Naive thymus-derived CD4-positive, alpha-beta T cell (primary cell): ENCODE measurements at regions of chr1 and their contacts with region 1.

Region 1: DNA sequence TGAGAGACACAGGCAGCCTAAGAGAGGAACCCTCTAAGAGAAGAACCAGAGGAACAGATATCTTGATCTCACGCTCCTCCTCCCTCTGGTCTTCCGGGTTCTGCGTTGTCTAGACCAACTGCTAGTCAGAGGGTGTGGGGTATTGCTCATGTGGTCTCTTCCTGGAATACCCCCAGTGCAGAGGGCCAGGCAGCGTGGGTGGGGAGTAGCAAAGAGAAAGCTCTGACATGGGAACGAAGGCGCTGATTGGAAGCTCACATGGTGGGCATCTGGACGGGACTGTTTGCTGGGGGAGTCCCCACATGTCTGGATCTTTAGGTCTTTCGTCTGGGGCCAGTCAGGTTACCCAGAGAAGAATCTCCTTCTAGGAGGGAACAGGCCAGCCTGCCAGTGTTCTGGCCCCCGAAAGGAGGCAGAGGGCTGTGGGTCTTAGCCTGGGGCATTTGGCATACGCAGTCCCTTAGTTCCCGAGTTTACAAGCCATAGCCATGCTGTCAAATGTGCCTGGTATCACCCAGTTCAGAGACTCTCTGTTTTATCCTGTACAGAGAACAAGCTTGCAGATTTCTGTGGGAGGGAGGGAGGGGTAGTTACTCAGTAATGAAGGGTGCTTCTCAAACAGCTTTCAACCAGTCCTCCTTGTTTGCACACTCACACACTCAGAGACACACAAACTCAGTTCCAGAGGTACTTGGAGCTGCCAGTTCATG is 18.3 kb upstream of the IL6R start:
- DNase-seq: peak; percentile 21 to 81 (median 66)
- ATAC-seq: peak; percentile 95
- H3K4me3 ChIP-seq: peak overlapping the region; percentile 57
- H3K4me3 Mint-ChIP-seq: peak overlapping the region; percentile 65 to 92 (median 83)
- H3K27ac ChIP-seq: peak overlapping the region; percentile 82
- H3K27ac Mint-ChIP-seq: peak overlapping the region; percentile 92 to 99 (median 97)
- H3K4me1 ChIP-seq: peaks cover 26 to 38% of the 10 kb centered on the region in 2 donors
- H3K4me1 Mint-ChIP-seq: peaks cover 28 to 63% (median 43%) of the 10 kb centered on the region in 7 donors
- H3K27me3 ChIP-seq: no peaks in the 10 kb centered on the region
- H3K27me3 Mint-ChIP-seq: no peaks in the 10 kb centered on the region

Region 2: DNA sequence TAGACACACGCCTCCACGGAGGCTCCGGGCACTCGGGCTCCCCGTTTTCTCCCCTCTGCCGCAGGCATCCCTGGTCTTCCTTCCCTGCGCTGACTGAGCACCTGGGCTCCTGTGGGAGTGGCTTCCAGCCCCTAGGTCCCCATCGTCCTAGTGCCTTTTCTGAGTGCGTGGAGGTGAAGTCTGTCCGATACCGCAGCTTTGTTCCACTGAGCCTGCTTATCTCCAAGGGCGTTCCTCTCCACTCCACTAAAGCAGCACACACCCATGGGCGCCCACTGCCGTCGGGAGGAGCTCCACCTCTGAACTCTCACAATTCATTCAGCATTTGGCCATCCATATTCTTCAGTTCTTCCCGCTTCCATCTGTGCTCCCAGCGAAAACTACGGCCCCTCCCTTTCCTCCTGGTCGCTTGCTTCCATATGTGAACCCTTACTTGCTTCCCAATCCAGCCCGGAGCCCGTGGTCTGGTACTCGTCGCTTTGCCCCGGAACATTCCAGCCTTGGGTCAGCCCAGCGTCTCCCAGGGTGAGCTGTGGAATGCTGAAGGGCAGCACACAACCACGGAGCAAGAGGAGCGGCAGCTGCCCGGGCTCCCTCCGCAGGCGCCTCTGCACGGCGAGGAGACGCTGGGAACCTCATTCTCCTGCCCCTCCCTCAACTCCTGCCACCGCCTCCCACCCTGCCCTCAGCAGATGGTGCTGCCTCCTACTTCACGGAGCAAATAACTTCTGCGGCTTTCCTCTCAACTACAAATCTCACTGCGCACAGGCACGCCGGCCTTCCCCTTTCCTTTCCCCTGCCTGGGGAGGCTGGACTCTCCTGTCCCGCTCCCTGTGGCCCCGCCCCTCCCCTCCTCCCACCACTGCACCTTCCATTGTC is 34.0 kb before region 1 on chr1:
- CTCF ChIA-PET with region 1: interaction called, 7 read pairs
- POLR2A ChIA-PET with region 1: interaction called, 13 read pairs
- intact Hi-C with region 1: loop called in 1 of 2 experiments (anchors 1 kb)
- DNase-seq: peak in 8 of 9 donors; percentile 45 to 58 (median 52)
- ATAC-seq: peak; percentile 84
- H3K4me3 ChIP-seq: peak overlapping the region; percentile 79
- H3K4me3 Mint-ChIP-seq: peak overlapping the region; percentile 76 to 98 (median 91)
- H3K27ac ChIP-seq: peak overlapping the region; percentile 74
- H3K27ac Mint-ChIP-seq: peak overlapping the region; percentile 66 to 97 (median 88)
- H3K4me1 ChIP-seq: peaks cover 13 to 32% of the 10 kb centered on the region in 2 donors
- H3K4me1 Mint-ChIP-seq: peaks cover 29 to 64% (median 48%) of the 10 kb centered on the region in 7 donors
- H3K27me3 ChIP-seq: no peaks in the 10 kb centered on the region
- H3K27me3 Mint-ChIP-seq: peaks cover 0 to 2% (median 0%) of the 10 kb centered on the region in 5 donors

Region 3: GRCh38 chr1:154361357-154361756 is 25.4 kb before region 1 on chr1:
- CTCF ChIA-PET with region 1: interaction called, 3 read pairs
- POLR2A ChIA-PET with region 1: interaction called, 10 read pairs
- intact Hi-C with region 1: no loop called
- DNase-seq: no peak
- ATAC-seq: no peak
- H3K4me3 ChIP-seq: no peak overlapping the region
- H3K4me3 Mint-ChIP-seq: no peak overlapping the region
- H3K27ac ChIP-seq: no peak overlapping the region
- H3K27ac Mint-ChIP-seq: no peak overlapping the region
- H3K4me1 ChIP-seq: peaks cover 0 to 5% of the 10 kb centered on the region in 2 donors
- H3K4me1 Mint-ChIP-seq: peaks cover 2 to 5% (median 5%) of the 10 kb centered on the region in 7 donors
- H3K27me3 ChIP-seq: no peaks in the 10 kb centered on the region
- H3K27me3 Mint-ChIP-seq: peaks cover 0 to 10% (median 0%) of the 10 kb centered on the region in 5 donors

Region 4: GRCh38 chr1:154371436-154371835 is 15.4 kb before region 1 on chr1:
- CTCF ChIA-PET with region 1: interaction called, 10 read pairs
- POLR2A ChIA-PET with region 1: interaction called, 3 read pairs
- intact Hi-C with region 1: no loop called
- DNase-seq: no peak
- ATAC-seq: no peak
- H3K4me3 ChIP-seq: no peak overlapping the region
- H3K4me3 Mint-ChIP-seq: no peak overlapping the region
- H3K27ac ChIP-seq: no peak overlapping the region
- H3K27ac Mint-ChIP-seq: no peak overlapping the region
- H3K4me1 ChIP-seq: no peaks in the 10 kb centered on the region
- H3K4me1 Mint-ChIP-seq: peaks cover 0 to 9% (median 1%) of the 10 kb centered on the region in 7 donors
- H3K27me3 ChIP-seq: no peaks in the 10 kb centered on the region
- H3K27me3 Mint-ChIP-seq: no peaks in the 10 kb centered on the region

Region 5: GRCh38 chr1:154398141-154398540 is 11.3 kb after region 1 on chr1:
- CTCF ChIA-PET with region 1: interaction called, 18 read pairs
- POLR2A ChIA-PET with region 1: interaction called, 43 read pairs
- intact Hi-C with region 1: no loop called
- DNase-seq: no peak
- ATAC-seq: no peak
- H3K4me3 ChIP-seq: no peak overlapping the region
- H3K4me3 Mint-ChIP-seq: no peak overlapping the region
- H3K27ac ChIP-seq: no peak overlapping the region
- H3K27ac Mint-ChIP-seq: peak overlapping the region in 1 of 9 donors; percentile 52
- H3K4me1 ChIP-seq: peaks cover 18 to 28% of the 10 kb centered on the region in 2 donors
- H3K4me1 Mint-ChIP-seq: peaks cover 17 to 56% (median 41%) of the 10 kb centered on the region in 7 donors
- H3K27me3 ChIP-seq: no peaks in the 10 kb centered on the region
- H3K27me3 Mint-ChIP-seq: peaks cover 0 to 2% (median 0%) of the 10 kb centered on the region in 5 donors

Region 6: DNA sequence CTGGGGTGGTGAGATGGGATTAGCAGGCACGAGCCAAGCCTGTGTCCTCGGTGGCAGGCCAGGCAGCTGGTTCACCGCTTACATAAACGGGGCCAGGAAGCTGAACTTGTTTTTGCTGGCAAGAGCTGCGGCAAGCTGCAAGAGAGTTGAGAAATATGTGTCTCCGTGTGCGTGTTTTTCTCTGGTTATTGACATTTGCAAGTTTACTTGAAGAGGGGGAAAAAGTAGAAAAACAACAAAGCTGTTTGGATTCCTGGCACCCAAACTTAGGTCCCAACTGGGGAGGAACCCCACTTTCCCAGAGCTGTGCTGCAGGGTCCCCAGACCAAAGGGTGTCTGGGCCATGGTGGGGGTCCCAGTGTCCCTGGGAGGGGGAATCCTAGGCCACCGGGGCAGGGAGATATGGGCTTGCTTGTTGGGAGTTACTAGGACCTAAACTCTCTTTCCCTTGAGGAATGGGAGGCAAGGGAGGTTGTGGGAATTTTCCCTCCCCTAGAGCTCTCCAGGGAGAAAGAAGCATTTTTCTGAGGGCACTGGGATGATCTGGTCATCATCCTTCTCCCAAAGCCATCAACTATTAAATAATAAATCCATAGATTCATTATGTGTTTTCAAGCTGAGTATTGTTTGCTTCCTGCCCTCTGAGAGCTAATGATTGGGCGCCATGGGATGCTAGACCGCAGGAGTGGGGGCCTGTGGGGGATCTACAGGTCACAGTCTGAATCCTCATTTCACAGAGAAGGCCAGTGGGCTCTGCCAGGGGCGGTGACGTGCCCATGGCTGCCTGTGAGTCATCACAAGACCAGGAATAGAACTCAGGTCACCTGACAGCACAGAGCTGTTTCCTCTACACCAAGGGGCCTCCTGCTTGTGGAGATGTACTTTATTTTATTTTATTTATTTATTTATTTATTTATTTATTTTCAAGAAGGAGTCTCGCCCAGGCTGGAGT is 33.1 kb after region 1 on chr1:
- CTCF ChIA-PET with region 1: no interaction called
- POLR2A ChIA-PET with region 1: interaction called, 16 read pairs
- intact Hi-C with region 1: no loop called
- DNase-seq: peak in 7 of 9 donors; percentile 40 to 66 (median 55)
- ATAC-seq: peak; percentile 84
- H3K4me3 ChIP-seq: peak overlapping the region; percentile 40
- H3K4me3 Mint-ChIP-seq: peak overlapping the region; percentile 70 to 86 (median 78)
- H3K27ac ChIP-seq: peak overlapping the region; percentile 76
- H3K27ac Mint-ChIP-seq: peak overlapping the region; percentile 76 to 97 (median 93)
- H3K4me1 ChIP-seq: peaks cover 0 to 78% of the 10 kb centered on the region in 2 donors
- H3K4me1 Mint-ChIP-seq: peaks cover 33 to 99% (median 89%) of the 10 kb centered on the region in 7 donors
- H3K27me3 ChIP-seq: no peaks in the 10 kb centered on the region
- H3K27me3 Mint-ChIP-seq: no peaks in the 10 kb centered on the region

Region 7: DNA sequence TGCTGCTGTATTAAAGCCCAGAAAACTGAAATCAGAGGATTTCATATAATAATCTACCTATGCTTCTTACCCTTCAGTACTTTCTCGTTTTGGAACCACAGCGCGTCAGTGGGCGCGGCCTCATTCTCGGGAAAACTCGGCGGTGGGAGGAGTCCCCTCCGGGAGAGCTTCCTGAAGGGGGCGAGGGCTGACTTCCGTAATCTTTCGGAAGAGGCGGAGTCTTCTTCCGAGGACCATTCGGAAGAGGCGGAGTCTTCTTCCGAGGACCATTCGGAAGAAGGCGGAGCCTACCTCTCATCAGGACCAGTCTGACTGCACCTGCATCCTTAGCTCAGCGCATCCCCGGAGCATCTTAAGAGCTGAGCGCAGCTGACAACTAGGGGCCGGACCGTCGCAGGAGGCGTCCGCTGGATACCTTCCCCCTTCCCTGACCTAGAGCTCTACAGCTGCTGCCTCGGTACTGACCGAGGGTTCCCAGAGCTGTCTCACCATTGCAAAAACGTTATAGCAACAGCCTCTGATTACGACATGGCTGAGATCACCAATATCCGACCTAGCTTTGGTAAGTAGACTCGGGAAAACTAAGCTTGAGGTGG is 1472.5 kb after region 1 on chr1 and contains the start of gene SYT11:
- CTCF ChIA-PET with region 1: no interaction called
- POLR2A ChIA-PET with region 1: no interaction called
- intact Hi-C with region 1: no loop called
- DNase-seq: peak; percentile 78 to 93 (median 90)
- ATAC-seq: peak; percentile 90
- H3K4me3 ChIP-seq: peak within 1 kb of the TSS; percentile 62
- H3K4me3 Mint-ChIP-seq: peak within 1 kb of the TSS; percentile 75 to 95 (median 92)
- H3K27ac ChIP-seq: peak within 1 kb of the TSS; percentile 72
- H3K27ac Mint-ChIP-seq: peak within 1 kb of the TSS; percentile 64 to 97 (median 86)
- H3K4me1 ChIP-seq: peaks cover 17 to 25% of the 10 kb centered on the region in 2 donors
- H3K4me1 Mint-ChIP-seq: peaks cover 0 to 51% (median 39%) of the 10 kb centered on the region in 7 donors
- H3K27me3 ChIP-seq: no peaks in the 10 kb centered on the region
- H3K27me3 Mint-ChIP-seq: peaks cover 0 to 24% (median 11%) of the 10 kb centered on the region in 5 donors
- total RNA-seq, gene SYT11: 1.4 to 22.9 (median 2.7) TPM